GM13976 (cell line): ENCODE measurements at regions of chr3 and their contacts with region 1.

Region 1: DNA sequence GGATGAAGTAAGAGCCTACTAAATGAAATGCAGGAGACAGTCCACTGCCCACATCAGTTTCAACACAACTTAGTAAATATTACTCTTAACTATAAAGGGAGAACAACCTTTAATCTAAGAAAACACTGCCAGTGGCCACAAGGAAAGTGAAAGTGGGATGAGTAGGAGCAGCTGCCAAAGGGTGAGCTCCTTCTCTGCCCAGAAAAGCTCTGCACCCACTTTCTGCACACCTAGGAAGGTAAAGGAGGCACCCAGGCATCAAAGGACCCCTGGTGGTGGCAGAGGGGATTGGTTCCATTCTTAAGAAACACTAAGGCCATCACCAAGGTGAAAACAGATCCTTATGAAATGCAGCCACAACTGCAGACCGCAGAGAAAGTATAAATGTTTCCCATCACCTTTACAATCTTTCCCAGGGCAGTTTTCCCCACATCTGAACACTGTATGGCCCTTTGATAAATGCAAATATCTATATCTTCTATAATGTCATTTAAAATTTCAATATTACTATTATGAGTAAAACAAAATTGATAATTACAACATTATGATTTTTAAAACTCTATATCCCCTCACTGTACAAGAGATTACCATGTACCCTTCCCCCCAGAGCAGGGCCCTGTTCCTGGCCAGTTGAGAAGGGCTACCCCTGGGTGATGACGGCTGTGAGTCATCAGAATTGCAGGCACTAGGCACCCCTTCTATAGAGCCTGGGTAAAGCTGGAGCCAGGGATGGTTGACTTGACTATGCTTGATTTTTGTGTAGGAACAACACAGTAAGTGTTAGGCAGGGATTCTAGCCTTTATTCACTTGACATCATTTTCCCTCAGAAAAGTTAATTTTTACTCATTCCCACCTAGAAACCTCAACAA is 92.0 kb downstream of the SNRK start:
- DNase-seq: peak; percentile 78
- CTCF ChIP-seq: peak; percentile 46

Region 2: DNA sequence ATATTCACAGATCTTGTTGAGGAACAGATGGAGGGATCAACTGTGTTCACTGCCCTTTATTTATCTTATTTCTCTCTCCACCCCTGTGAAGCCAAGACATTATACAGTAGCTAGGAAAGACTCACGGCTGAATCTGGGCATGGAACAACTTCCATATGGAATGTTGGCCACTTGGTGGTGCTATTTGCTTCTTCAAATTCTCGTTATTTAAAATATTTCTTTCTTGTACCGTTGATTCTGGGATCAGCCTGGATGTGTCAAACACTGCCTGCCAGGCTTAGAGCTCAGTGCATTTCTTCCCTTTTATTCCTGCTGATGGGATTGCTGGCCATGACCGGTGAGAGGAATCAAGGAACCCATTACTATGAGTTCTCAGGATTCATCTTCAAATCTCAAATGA is 416.7 kb before region 1 on chr3:
- in situ Hi-C with region 1: loop called (anchors 25 kb)
- DNase-seq: no peak
- CTCF ChIP-seq: peak; percentile 50